ENCODE measurements at regions of chr5 and their contacts with region 1.

Region 1: DNA sequence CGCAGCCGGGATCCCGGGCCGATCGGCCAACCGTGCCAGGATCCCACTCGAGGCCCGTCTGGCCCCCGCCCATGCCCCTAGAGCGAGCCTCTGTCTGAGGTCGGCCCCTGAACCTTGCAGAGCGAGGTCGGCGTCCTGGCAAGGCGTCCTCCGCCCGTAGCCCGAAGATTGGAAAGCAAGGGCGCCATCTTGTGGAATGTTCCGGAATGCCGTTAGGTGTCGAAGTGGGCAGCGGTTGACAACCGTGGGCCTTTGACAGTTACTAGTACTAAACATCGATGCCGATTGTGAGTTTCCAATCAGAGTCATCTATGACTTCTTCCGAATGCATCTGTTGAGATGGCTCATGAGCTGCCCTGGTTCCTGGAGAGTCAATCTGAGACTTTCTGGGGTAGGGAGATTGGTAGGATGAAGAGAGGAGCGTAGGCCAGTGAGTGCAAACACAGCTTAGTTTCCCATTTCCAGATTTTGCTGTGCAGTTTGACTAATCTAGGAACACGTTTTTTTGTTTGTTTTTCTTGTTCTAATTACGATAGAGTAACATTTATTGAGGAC is 923 bp upstream of the PLK2 start:
- DNase-seq: peak; percentile 86 to 91 (median 87)
- H3K4me3 ChIP-seq: peak overlapping the region; percentile 1 to 80
- H3K4me3 Mint-ChIP-seq: peak overlapping the region; percentile 77 to 90 (median 88)
- H3K27ac ChIP-seq: peak overlapping the region; percentile 83
- H3K27ac Mint-ChIP-seq: peak overlapping the region; percentile 70 to 95 (median 88)
- H3K4me1 ChIP-seq: peaks cover 12% of the 10 kb centered on the region
- H3K4me1 Mint-ChIP-seq: peaks cover 3 to 16% (median 14%) of the 10 kb centered on the region in 4 donors
- H3K27me3 ChIP-seq: peaks cover 8% of the 10 kb centered on the region
- H3K27me3 Mint-ChIP-seq: peaks cover 0 to 4% of the 10 kb centered on the region in 2 donors

Region 2: GRCh38 chr5:56909294-56910209 is 1551.3 kb before region 1 on chr5 and contains the start of gene SETD9:
- CTCF ChIA-PET with region 1: interaction called, 3 read pairs
- POLR2A ChIA-PET with region 1: no interaction called
- intact Hi-C with region 1: loop called (anchors 2 kb)
- DNase-seq: peak; percentile 76 to 83 (median 81)
- H3K4me3 ChIP-seq: peak within 1 kb of the TSS; percentile 88 to 97
- H3K4me3 Mint-ChIP-seq: peak within 1 kb of the TSS; percentile 89 to 98 (median 92)
- H3K27ac ChIP-seq: peak within 1 kb of the TSS; percentile 62
- H3K27ac Mint-ChIP-seq: peak within 1 kb of the TSS; percentile 65 to 95 (median 92)
- H3K4me1 ChIP-seq: peaks cover 15% of the 10 kb centered on the region
- H3K4me1 Mint-ChIP-seq: peaks cover 15 to 25% (median 17%) of the 10 kb centered on the region in 4 donors
- H3K27me3 ChIP-seq: no peaks in the 10 kb centered on the region
- H3K27me3 Mint-ChIP-seq: no peaks in the 10 kb centered on the region
- total RNA-seq, gene SETD9: 3.8 to 6.8 TPM

Region 3: DNA sequence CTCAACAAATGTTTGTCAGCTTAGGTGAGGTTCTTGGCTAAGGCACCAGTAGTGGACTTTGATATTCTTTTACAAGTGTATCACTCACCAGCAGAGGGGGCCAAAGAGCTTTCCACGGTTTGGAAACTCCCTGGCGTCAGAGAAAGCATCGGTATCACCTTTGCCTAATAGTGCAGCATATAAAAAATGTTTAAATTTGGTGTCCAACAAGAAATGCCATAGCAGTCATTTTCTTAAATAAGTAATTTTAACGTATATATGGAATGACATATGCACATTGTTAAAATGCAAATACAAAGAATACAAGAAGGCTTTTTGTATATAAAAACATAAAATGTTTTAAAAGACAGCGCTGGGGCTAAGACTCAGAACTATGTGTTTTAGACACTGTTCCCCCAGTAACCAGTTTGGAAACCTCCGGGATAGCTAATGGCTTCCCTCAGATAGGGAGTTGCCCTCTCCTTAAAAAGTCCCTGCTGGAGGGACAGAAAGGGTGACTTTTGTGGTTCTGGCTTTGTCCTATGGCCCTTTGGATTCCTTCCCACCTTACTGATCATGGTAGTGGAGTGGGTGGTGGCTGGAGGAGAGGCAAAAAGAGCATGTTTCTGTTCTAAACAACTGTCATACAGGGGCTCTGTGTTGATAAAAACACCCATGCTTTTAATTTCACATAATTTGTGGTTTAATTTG is 1162.4 kb before region 1 on chr5:
- CTCF ChIA-PET with region 1: interaction called, 176 read pairs
- POLR2A ChIA-PET with region 1: interaction called, 34 read pairs
- intact Hi-C with region 1: loop called (anchors 1 kb)
- DNase-seq: peak; percentile 78 to 86 (median 83)
- H3K4me3 ChIP-seq: peak overlapping the region; percentile 12 to 14
- H3K4me3 Mint-ChIP-seq: peak overlapping the region; percentile 69 to 87 (median 80)
- H3K27ac ChIP-seq: no peak overlapping the region
- H3K27ac Mint-ChIP-seq: peak overlapping the region; percentile 15 to 90 (median 74)
- H3K4me1 ChIP-seq: peaks cover 6% of the 10 kb centered on the region
- H3K4me1 Mint-ChIP-seq: peaks cover 9 to 26% (median 18%) of the 10 kb centered on the region in 4 donors
- H3K27me3 ChIP-seq: no peaks in the 10 kb centered on the region
- H3K27me3 Mint-ChIP-seq: no peaks in the 10 kb centered on the region

Region 4: GRCh38 chr5:57494104-57495098 is 966.4 kb before region 1 on chr5:
- CTCF ChIA-PET with region 1: interaction called, 169 read pairs
- POLR2A ChIA-PET with region 1: interaction called, 11 read pairs
- intact Hi-C with region 1: loop called (anchors 1 kb)
- DNase-seq: peak in 2 of 5 donors; percentile 7 to 42
- H3K4me3 ChIP-seq: no peak overlapping the region
- H3K4me3 Mint-ChIP-seq: peak overlapping the region in 7 of 8 donors; percentile 2 to 77 (median 52)
- H3K27ac ChIP-seq: no peak overlapping the region
- H3K27ac Mint-ChIP-seq: peak overlapping the region; percentile 82 to 93 (median 89)
- H3K4me1 ChIP-seq: peaks cover 35% of the 10 kb centered on the region
- H3K4me1 Mint-ChIP-seq: peaks cover 18 to 44% (median 30%) of the 10 kb centered on the region in 4 donors
- H3K27me3 ChIP-seq: no peaks in the 10 kb centered on the region
- H3K27me3 Mint-ChIP-seq: peaks cover 0 to 2% of the 10 kb centered on the region in 2 donors

Region 5: GRCh38 chr5:57779383-57780223 is 681.2 kb before region 1 on chr5:
- CTCF ChIA-PET with region 1: interaction called, 39 read pairs
- POLR2A ChIA-PET with region 1: interaction called, 4 read pairs
- intact Hi-C with region 1: loop called (anchors 1 kb)
- DNase-seq: peak in 3 of 5 donors; percentile 13 to 17 (median 14)
- H3K4me3 ChIP-seq: no peak overlapping the region
- H3K4me3 Mint-ChIP-seq: no peak overlapping the region
- H3K27ac ChIP-seq: no peak overlapping the region
- H3K27ac Mint-ChIP-seq: no peak overlapping the region
- H3K4me1 ChIP-seq: no peaks in the 10 kb centered on the region
- H3K4me1 Mint-ChIP-seq: no peaks in the 10 kb centered on the region
- H3K27me3 ChIP-seq: no peaks in the 10 kb centered on the region
- H3K27me3 Mint-ChIP-seq: peaks cover 0 to 3% of the 10 kb centered on the region in 2 donors

Region 6: GRCh38 chr5:58184910-58185309 is 275.9 kb before region 1 on chr5:
- CTCF ChIA-PET with region 1: no interaction called
- POLR2A ChIA-PET with region 1: no interaction called
- intact Hi-C with region 1: no loop called
- DNase-seq: no peak
- H3K4me3 ChIP-seq: no peak overlapping the region
- H3K4me3 Mint-ChIP-seq: no peak overlapping the region
- H3K27ac ChIP-seq: no peak overlapping the region
- H3K27ac Mint-ChIP-seq: no peak overlapping the region
- H3K4me1 ChIP-seq: no peaks in the 10 kb centered on the region
- H3K4me1 Mint-ChIP-seq: no peaks in the 10 kb centered on the region
- H3K27me3 ChIP-seq: no peaks in the 10 kb centered on the region
- H3K27me3 Mint-ChIP-seq: peaks cover 0 to 1% of the 10 kb centered on the region in 2 donors

Region 7: GRCh38 chr5:58318468-58318867 is 142.3 kb before region 1 on chr5:
- CTCF ChIA-PET with region 1: no interaction called
- POLR2A ChIA-PET with region 1: no interaction called
- intact Hi-C with region 1: no loop called
- DNase-seq: no peak
- H3K4me3 ChIP-seq: no peak overlapping the region
- H3K4me3 Mint-ChIP-seq: no peak overlapping the region
- H3K27ac ChIP-seq: no peak overlapping the region
- H3K27ac Mint-ChIP-seq: no peak overlapping the region
- H3K4me1 ChIP-seq: no peaks in the 10 kb centered on the region
- H3K4me1 Mint-ChIP-seq: no peaks in the 10 kb centered on the region
- H3K27me3 ChIP-seq: no peaks in the 10 kb centered on the region
- H3K27me3 Mint-ChIP-seq: peaks cover 0 to 2% of the 10 kb centered on the region in 2 donors

Region 8: GRCh38 chr5:58400737-58401136 is 60.1 kb before region 1 on chr5:
- CTCF ChIA-PET with region 1: no interaction called
- POLR2A ChIA-PET with region 1: no interaction called
- intact Hi-C with region 1: no loop called
- DNase-seq: no peak
- H3K4me3 ChIP-seq: no peak overlapping the region
- H3K4me3 Mint-ChIP-seq: no peak overlapping the region
- H3K27ac ChIP-seq: no peak overlapping the region
- H3K27ac Mint-ChIP-seq: no peak overlapping the region
- H3K4me1 ChIP-seq: no peaks in the 10 kb centered on the region
- H3K4me1 Mint-ChIP-seq: no peaks in the 10 kb centered on the region
- H3K27me3 ChIP-seq: no peaks in the 10 kb centered on the region
- H3K27me3 Mint-ChIP-seq: no peaks in the 10 kb centered on the region

Region 9: DNA sequence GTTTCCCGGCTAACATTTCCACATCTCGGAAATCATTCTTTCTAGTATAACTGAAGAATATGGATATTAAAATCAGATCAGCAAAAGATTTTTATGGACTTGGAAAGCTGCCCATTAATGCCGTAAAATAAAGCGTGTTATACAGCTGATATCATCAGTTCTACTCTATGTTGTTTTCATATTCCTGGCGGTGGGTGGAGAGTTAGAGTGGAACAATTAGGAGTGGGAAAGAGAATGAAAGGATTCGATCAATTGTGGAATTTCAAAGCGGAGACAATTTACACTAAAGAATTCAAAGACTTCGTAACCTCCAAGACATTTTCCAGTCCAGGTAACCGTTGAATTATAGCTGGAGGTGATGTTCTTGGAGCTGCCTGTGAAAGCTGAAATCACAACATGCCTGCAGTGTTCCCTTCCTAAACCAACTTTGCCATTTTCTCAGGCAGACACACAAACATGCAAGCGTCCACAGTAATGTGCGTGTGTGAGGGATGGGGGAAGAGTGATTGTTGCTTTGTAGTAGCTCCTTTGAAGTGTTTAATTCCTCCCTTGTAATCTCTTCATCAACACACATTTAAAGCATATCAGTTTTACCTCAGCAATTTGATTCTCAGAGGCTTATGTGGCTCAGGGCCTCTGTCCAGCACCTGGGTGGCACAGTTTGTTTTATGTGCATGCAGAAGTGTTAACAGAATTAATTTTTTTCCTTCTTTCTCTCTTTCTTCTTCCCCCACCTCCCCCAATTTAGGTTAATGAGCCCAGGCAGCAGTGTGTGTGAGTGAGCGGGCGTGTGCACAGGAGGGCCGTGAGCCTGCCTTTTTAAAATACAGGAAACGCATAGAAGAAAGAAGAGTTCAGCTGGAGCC is 666.1 kb after region 1 on chr5:
- CTCF ChIA-PET with region 1: no interaction called
- POLR2A ChIA-PET with region 1: no interaction called
- intact Hi-C with region 1: loop called (anchors 2 kb)
- DNase-seq: peak in 1 of 5 donors; percentile 36
- H3K4me3 ChIP-seq: peak overlapping the region; percentile 19 to 34
- H3K4me3 Mint-ChIP-seq: no peak overlapping the region
- H3K27ac ChIP-seq: peak overlapping the region; percentile 80
- H3K27ac Mint-ChIP-seq: no peak overlapping the region
- H3K4me1 ChIP-seq: peaks cover 76% of the 10 kb centered on the region
- H3K4me1 Mint-ChIP-seq: peaks cover 0 to 17% (median 7%) of the 10 kb centered on the region in 4 donors
- H3K27me3 ChIP-seq: no peaks in the 10 kb centered on the region
- H3K27me3 Mint-ChIP-seq: no peaks in the 10 kb centered on the region

Measured in CD4-positive, alpha-beta memory T cell (primary cell).